Activated T-helper 2 cell treated with anti-CD3 and anti-CD28 coated beads, Interferon-gamma antibody, Interleukin-2, Interleukin-4, amounts not matched to agents 10 μg/mL and 5 μg/mL and 100 μg/mL, durations not matched to agents 14 hours and 24 hours and 36 hours (primary cell): ENCODE measurements at regions of chr19 and their contacts with region 1.

Region 1: GRCh38 chr19:43754503-43755255 is at the start of gene SMG9:
- DNase-seq: peak; percentile 99
- H3K4me3 Mint-ChIP-seq: peak within 1 kb of the TSS; percentile 96
- H3K27ac Mint-ChIP-seq: peak within 1 kb of the TSS; percentile 100
- H3K4me1 Mint-ChIP-seq: peaks cover 50% of the 10 kb centered on the region
- H3K27me3 Mint-ChIP-seq: no peaks in the 10 kb centered on the region
- total RNA-seq, gene SMG9: 69.1 and 73.1 TPM in 2 replicates

Region 2: GRCh38 chr19:43700395-43701000 is 54.2 kb before region 1 on chr19:
- intact Hi-C with region 1: loop called (anchors 5 kb)
- DNase-seq: no peak
- H3K4me3 Mint-ChIP-seq: peak overlapping the region; percentile 82
- H3K27ac Mint-ChIP-seq: peak overlapping the region; percentile 96
- H3K4me1 Mint-ChIP-seq: peaks cover 21% of the 10 kb centered on the region
- H3K27me3 Mint-ChIP-seq: peaks cover 19% of the 10 kb centered on the region

Region 3: DNA sequence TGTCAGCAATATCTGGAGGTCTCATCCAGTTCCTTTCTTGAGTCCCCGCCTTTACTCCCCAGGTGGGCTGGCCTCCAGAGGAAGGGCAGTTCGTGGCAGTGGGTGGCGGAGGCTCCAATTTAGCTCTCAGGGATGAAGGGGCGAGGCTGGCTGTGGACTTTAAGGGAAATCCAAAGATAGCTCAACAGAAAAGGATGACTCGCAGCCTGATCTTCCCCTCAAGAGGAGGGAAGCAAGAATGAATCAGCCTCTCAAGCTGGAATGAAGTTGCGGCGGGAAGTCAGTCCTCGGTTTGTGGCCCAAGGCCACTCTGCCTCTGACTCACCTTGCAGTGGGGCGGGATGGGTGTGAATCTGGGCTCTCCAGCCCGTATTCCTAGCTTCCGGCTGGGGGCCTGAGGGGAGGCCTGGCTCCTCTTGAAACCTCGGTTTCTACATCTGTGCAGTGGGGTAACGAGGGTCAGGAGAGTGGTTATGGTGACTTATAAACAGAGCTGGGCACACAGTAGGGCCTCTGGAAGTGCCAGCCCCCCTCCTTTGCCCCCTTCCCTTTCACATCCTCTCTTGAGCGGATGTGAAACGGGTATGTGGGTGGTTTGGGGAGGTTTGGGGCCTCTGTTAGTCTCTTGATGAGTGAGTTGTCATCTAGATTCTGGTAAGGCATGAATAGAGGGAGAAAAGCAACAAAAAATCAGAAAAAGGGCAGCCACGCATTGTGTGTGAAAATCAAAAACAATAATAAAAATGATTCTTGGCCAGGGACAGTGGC is 10.6 kb after region 1 on chr19:
- intact Hi-C with region 1: loop called (anchors 1 kb)
- DNase-seq: peak; percentile 79
- H3K4me3 Mint-ChIP-seq: peak overlapping the region; percentile 19
- H3K27ac Mint-ChIP-seq: peak overlapping the region; percentile 74
- H3K4me1 Mint-ChIP-seq: peaks cover 63% of the 10 kb centered on the region
- H3K27me3 Mint-ChIP-seq: no peaks in the 10 kb centered on the region